Ovary (tissue), 10 donors: ENCODE measurements at regions of chr15 and their contacts with region 1.

Region 1: DNA sequence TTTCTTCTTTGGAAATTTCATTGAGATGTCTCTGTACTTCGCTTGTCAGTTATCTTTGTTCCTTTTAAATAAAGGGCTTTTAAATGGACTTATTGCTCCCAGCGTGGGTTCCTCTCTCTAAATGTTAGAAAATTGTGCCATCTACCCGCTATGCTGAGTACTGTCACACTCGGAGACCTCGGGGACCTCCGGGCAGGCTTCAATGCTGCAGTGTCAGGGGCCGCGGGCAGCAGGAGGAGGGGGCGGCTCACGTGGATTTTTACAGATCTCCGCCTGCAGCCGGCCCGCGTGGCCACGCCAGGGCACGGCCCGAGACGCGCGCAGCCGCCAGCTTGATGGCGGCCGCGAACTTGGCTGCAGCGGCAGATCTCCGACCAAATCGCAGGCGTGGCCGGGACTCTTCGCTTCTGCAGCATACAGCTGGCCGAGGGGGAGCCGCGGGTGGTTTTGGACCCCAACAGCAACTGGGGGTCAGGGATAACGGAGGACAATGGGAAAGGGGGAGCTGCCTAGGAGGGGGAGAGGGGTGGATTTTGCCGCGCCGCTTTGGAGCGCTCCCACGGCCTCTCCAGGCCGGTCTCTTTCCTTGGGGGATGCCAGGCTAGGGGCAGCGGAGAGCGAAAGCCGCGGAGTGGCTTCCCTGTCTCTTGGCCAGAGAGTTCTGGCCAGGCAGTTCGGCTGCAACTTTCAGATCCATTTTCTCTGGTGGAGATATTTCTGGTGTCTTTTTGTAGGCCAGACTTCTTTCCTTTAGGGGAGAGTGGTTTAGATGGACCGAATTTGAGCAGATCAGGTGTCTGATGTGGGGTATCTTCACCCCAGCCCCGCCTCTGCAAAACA is 15.3 kb downstream of the NR2F2 start:
- DNase-seq: peak; percentile 85 to 91 (median 89)
- H3K4me3 ChIP-seq: peak overlapping the region; percentile 46
- H3K27ac ChIP-seq: peak overlapping the region; percentile 98 to 99
- H3K4me1 ChIP-seq: peaks cover 10% of the 10 kb centered on the region
- H3K27me3 ChIP-seq: no peaks in the 10 kb centered on the region
- CTCF ChIP-seq: peak; percentile 42 to 70 (median 64)
- EP300 ChIP-seq: no peak
- POLR2A ChIP-seq: peak; percentile 38

Region 2: DNA sequence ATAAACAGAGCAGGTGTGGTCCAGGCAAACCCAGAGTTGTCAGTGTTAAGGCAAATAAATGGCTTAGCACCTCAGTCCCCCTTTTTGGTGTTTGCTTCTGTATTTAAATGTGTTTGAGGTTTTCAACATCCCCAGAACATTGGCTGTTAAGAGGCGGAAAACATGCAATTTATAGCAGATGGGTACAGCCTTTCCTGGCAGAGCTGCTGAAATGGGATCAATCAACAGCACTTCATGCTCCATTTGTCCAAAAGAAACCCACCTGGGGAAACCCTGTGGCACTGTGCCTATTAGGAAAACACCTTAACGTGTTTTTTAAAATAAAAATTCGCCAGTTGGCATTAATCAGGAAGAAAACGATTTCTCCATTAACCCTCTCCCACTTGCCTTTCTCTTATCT is 1979.0 kb before region 1 on chr15:
- intact Hi-C with region 1: loop called in 1 of 4 experiments (anchors 10 kb)
- DNase-seq: no peak
- H3K4me3 ChIP-seq: no peak overlapping the region
- H3K27ac ChIP-seq: no peak overlapping the region
- H3K4me1 ChIP-seq: no peaks in the 10 kb centered on the region
- H3K27me3 ChIP-seq: no peaks in the 10 kb centered on the region
- CTCF ChIP-seq: no peak
- EP300 ChIP-seq: no peak
- POLR2A ChIP-seq: no peak

Region 3: GRCh38 chr15:95259513-95259912 is 1086.3 kb before region 1 on chr15:
- intact Hi-C with region 1: loop called in 1 of 4 experiments (anchors 5 kb)
- DNase-seq: peak; percentile 71 to 83 (median 74)
- H3K4me3 ChIP-seq: no peak overlapping the region
- H3K27ac ChIP-seq: peak overlapping the region in 1 of 2 donors; percentile 29
- H3K4me1 ChIP-seq: peaks cover 8% of the 10 kb centered on the region
- H3K27me3 ChIP-seq: no peaks in the 10 kb centered on the region
- CTCF ChIP-seq: peak; percentile 63 to 82 (median 78)
- EP300 ChIP-seq: no peak
- POLR2A ChIP-seq: no peak

Region 4: GRCh38 chr15:95284933-95285421 is 1060.8 kb before region 1 on chr15:
- intact Hi-C with region 1: loop called in 2 of 4 experiments (anchors 5 kb)
- DNase-seq: peak in 2 of 5 donors; percentile 29 to 44
- H3K4me3 ChIP-seq: no peak overlapping the region
- H3K27ac ChIP-seq: peak overlapping the region in 1 of 2 donors; percentile 64
- H3K4me1 ChIP-seq: peaks cover 12% of the 10 kb centered on the region
- H3K27me3 ChIP-seq: no peaks in the 10 kb centered on the region
- CTCF ChIP-seq: peak in 1 of 3 donors; percentile 39
- EP300 ChIP-seq: no peak
- POLR2A ChIP-seq: no peak

Region 5: GRCh38 chr15:95326431-95327182 is 1019.2 kb before region 1 on chr15:
- intact Hi-C with region 1: loop called in 2 of 4 experiments (anchors 5 kb)
- DNase-seq: peak; percentile 70 to 84 (median 78)
- H3K4me3 ChIP-seq: peak overlapping the region; percentile 56
- H3K27ac ChIP-seq: peak overlapping the region; percentile 84 to 98
- H3K4me1 ChIP-seq: peaks cover 4% of the 10 kb centered on the region
- H3K27me3 ChIP-seq: no peaks in the 10 kb centered on the region
- CTCF ChIP-seq: no peak
- EP300 ChIP-seq: peak; percentile 17
- POLR2A ChIP-seq: peak; percentile 8

Region 6: GRCh38 chr15:95470997-95471689 is 874.6 kb before region 1 on chr15:
- intact Hi-C with region 1: loop called in 2 of 4 experiments (anchors 5 kb)
- DNase-seq: peak in 3 of 5 donors; percentile 58 to 67 (median 63)
- H3K4me3 ChIP-seq: no peak overlapping the region
- H3K27ac ChIP-seq: peak overlapping the region; percentile 26 to 77
- H3K4me1 ChIP-seq: peaks cover 12% of the 10 kb centered on the region
- H3K27me3 ChIP-seq: no peaks in the 10 kb centered on the region
- CTCF ChIP-seq: no peak
- EP300 ChIP-seq: no peak
- POLR2A ChIP-seq: no peak

Region 7: DNA sequence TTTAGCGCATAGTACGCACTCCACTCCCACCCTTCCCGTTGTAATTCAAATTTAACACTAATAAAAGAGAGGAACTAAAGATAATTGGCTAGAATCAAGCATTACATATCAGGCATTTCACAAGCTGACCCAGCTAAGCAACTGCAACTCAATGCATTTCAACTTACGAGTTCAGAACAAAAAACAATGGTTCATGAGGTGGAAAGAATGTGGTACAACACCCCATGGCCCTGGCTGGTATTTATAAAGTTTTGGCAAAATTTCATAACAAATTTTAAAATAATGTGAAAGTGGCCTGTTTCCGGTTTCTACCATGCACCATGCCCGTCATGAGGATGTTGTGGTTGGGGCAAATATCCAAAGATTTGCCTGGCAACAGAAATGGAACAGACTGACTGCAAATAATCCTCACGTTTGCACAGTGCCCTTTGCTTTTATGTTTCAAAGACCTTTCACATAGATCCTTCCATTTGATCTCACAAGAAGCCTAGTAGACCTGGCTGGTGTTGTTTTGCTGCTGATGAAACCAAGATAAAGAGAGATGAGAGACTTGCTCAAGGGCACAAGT is 470.6 kb before region 1 on chr15:
- intact Hi-C with region 1: loop called in 1 of 4 experiments (anchors 10 kb)
- DNase-seq: peak in 4 of 5 donors; percentile 36 to 65 (median 50)
- H3K4me3 ChIP-seq: peak overlapping the region; percentile 2
- H3K27ac ChIP-seq: peak overlapping the region in 1 of 2 donors; percentile 72
- H3K4me1 ChIP-seq: peaks cover 10% of the 10 kb centered on the region
- H3K27me3 ChIP-seq: no peaks in the 10 kb centered on the region
- CTCF ChIP-seq: peak in 1 of 3 donors; percentile 32
- EP300 ChIP-seq: no peak
- POLR2A ChIP-seq: no peak

Region 8: GRCh38 chr15:96122077-96122681 is 223.6 kb before region 1 on chr15:
- intact Hi-C with region 1: no loop called
- DNase-seq: no peak
- H3K4me3 ChIP-seq: no peak overlapping the region
- H3K27ac ChIP-seq: no peak overlapping the region
- H3K4me1 ChIP-seq: no peaks in the 10 kb centered on the region
- H3K27me3 ChIP-seq: no peaks in the 10 kb centered on the region
- CTCF ChIP-seq: no peak
- EP300 ChIP-seq: no peak
- POLR2A ChIP-seq: no peak